Endothelial cell of umbilical vein (primary cell): ENCODE measurements at regions of chr5 and their contacts with region 1.

Region 1: GRCh38 chr5:72510610-72511181 is 3.5 kb upstream of the ZNF366 start:
- DNase-seq: peak; percentile 80
- H3K4me3 ChIP-seq: no peak overlapping the region
- H3K27ac ChIP-seq: peak overlapping the region; percentile 65
- H3K4me1 ChIP-seq: peaks cover 49% of the 10 kb centered on the region
- H3K27me3 ChIP-seq: no peaks in the 10 kb centered on the region
- CTCF ChIP-seq: no peak
- POLR2A ChIP-seq: no peak

Region 2: GRCh38 chr5:72387985-72388384 is 122.7 kb before region 1 on chr5:
- CTCF ChIA-PET with region 1: no interaction called
- POLR2A ChIA-PET with region 1: no interaction called
- dilution Hi-C with region 1: no loop called
- intact Hi-C with region 1: loop called (anchors 5 kb)
- DNase-seq: peak; percentile 90
- H3K4me3 ChIP-seq: no peak overlapping the region
- H3K27ac ChIP-seq: peak overlapping the region; percentile 97
- H3K4me1 ChIP-seq: peaks cover 43% of the 10 kb centered on the region
- H3K27me3 ChIP-seq: no peaks in the 10 kb centered on the region
- CTCF ChIP-seq: no peak
- POLR2A ChIP-seq: no peak

Region 3: DNA sequence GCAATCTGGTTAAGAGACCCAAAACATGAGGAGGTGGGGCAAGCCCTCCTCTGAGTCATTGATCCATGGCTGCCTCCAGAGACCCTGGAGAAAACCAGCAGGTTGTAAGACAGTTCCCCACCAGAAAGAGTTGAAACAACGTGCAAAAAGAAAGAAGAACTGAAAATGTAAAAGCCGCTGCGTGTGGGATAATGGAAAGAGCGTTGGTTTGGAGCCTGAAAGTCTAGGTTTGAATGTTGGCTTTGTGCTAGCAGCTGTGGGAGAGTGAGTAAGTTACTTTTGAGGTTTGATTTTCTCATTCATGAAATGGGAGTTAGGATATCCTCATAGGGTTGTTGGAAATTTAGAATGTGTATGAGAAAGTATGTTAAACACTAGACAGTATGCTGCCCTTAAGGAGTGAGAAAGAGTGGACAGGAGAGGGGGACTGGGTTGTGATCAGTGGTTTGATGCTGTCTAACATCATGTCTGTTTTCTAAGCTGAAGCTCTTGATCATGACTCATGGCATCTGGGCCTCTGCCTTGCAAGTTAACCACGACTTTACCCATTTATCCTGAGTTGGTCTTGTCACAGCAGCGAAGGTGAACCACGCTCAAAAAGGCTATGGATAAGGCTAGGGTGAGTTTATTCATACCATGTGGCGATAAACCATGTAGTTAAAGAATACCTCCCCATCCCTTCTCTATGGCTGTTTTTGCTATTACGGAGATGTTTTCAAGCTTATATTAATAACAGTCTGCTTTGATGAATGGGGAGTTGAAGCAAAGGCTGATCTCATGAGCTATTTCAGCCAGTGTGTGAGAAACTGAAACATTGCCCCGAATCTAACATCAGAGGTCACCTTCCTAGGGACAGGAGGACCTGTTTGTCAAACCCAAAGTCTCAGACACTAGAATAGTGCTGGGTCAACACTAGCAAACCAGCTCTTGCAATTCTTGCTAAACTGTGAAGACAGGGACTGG is 44.8 kb before region 1 on chr5:
- CTCF ChIA-PET with region 1: interaction called, 5 read pairs
- POLR2A ChIA-PET with region 1: no interaction called
- dilution Hi-C with region 1: no loop called
- intact Hi-C with region 1: loop called (anchors 5 kb)
- DNase-seq: peak; percentile 23
- H3K4me3 ChIP-seq: no peak overlapping the region
- H3K27ac ChIP-seq: no peak overlapping the region
- H3K4me1 ChIP-seq: peaks cover 36% of the 10 kb centered on the region
- H3K27me3 ChIP-seq: no peaks in the 10 kb centered on the region
- CTCF ChIP-seq: no peak
- POLR2A ChIP-seq: no peak

Region 4: GRCh38 chr5:72498284-72498683 is 12.4 kb before region 1 on chr5:
- CTCF ChIA-PET with region 1: interaction called, 4 read pairs
- POLR2A ChIA-PET with region 1: interaction called, 14 read pairs
- dilution Hi-C with region 1: no loop called
- intact Hi-C with region 1: no loop called
- DNase-seq: peak; percentile 67
- H3K4me3 ChIP-seq: no peak overlapping the region
- H3K27ac ChIP-seq: no peak overlapping the region
- H3K4me1 ChIP-seq: peaks cover 22% of the 10 kb centered on the region
- H3K27me3 ChIP-seq: no peaks in the 10 kb centered on the region
- CTCF ChIP-seq: no peak
- POLR2A ChIP-seq: no peak